ENCODE measurements at regions of chr1 and their contacts with region 1.

Region 1: DNA sequence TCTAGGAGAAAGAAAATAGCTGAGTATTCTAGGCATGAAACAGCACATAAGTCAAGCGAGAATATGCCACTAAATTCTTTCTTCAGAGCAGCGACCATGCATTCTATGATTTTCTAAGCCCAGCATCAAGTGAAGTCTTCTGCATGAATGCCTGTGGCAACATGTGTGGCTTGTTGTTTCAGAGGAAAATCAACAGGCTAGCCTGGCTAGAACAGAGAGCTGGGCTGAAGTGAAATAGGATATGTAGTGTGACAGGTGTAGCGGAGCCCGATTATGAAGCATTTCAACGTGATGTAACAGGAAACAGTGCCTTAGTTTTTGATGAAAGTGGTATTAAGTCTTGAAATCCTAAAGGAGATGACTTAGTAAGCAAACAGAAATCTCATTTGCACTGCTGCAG is 7.0 kb downstream of the CSDE1 start:
- DNase-seq: no peak
- ATAC-seq: peak; percentile 80 to 89 (median 86)
- H3K4me3 ChIP-seq: peak overlapping the region; percentile 84
- H3K27ac ChIP-seq: peak overlapping the region; percentile 100
- H3K4me1 ChIP-seq: peaks cover 85% of the 10 kb centered on the region
- H3K27me3 ChIP-seq: no peaks in the 10 kb centered on the region
- CTCF ChIP-seq: no peak

Region 2: GRCh38 chr1:114467488-114467887 is 283.3 kb before region 1 on chr1:
- intact Hi-C with region 1: no loop called
- DNase-seq: no peak
- ATAC-seq: no peak
- H3K4me3 ChIP-seq: no peak overlapping the region
- H3K27ac ChIP-seq: no peak overlapping the region
- H3K4me1 ChIP-seq: peaks cover 2% of the 10 kb centered on the region
- H3K27me3 ChIP-seq: no peaks in the 10 kb centered on the region
- CTCF ChIP-seq: no peak

Region 3: GRCh38 chr1:114685851-114686534 is 64.8 kb before region 1 on chr1:
- intact Hi-C with region 1: loop called in 1 of 2 experiments (anchors 5 kb)
- DNase-seq: no peak
- ATAC-seq: peak; percentile 83 to 92 (median 87)
- H3K4me3 ChIP-seq: peak overlapping the region; percentile 31
- H3K27ac ChIP-seq: peak overlapping the region; percentile 94
- H3K4me1 ChIP-seq: peaks cover 75% of the 10 kb centered on the region
- H3K27me3 ChIP-seq: no peaks in the 10 kb centered on the region
- CTCF ChIP-seq: no peak

Region 4: DNA sequence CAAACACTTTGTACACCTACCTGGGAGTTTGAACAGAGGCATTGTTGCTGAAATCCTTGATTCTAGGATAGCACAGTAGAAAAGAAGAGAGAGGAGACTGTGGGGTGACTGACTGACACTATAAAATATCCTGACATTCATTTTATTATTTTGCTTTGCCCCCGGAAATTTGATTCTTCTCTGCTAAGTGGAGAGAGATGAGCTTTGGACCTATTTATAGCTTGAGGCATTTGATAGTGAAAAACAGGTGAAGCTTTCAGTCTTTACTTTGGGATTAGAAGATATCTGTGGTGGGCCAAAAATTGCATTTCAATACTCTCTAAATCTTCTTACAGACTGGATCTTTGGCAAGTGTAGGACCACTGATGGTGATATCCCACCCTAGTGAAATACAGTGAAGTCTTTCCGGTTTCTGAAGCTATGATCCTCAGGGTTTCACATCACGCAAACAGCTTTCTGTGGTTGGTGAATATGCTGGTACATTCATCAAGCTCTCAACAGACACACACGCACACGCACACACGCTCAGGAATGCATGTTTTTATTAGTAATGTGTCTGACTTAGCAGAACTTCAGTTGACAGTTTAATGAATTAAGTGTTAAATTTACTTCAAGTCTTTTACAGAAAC is 55.2 kb before region 1 on chr1 and contains the start of gene AMPD1:
- intact Hi-C with region 1: loop called in 1 of 2 experiments (anchors 1 kb)
- DNase-seq: no peak
- ATAC-seq: peak; percentile 71 to 80 (median 74)
- H3K4me3 ChIP-seq: peak within 1 kb of the TSS; percentile 75
- H3K27ac ChIP-seq: peak within 1 kb of the TSS; percentile 94
- H3K4me1 ChIP-seq: peaks cover 20% of the 10 kb centered on the region
- H3K27me3 ChIP-seq: no peaks in the 10 kb centered on the region
- CTCF ChIP-seq: no peak
- total RNA-seq, gene AMPD1: 73.4 to 289 (median 155) TPM

Region 5: DNA sequence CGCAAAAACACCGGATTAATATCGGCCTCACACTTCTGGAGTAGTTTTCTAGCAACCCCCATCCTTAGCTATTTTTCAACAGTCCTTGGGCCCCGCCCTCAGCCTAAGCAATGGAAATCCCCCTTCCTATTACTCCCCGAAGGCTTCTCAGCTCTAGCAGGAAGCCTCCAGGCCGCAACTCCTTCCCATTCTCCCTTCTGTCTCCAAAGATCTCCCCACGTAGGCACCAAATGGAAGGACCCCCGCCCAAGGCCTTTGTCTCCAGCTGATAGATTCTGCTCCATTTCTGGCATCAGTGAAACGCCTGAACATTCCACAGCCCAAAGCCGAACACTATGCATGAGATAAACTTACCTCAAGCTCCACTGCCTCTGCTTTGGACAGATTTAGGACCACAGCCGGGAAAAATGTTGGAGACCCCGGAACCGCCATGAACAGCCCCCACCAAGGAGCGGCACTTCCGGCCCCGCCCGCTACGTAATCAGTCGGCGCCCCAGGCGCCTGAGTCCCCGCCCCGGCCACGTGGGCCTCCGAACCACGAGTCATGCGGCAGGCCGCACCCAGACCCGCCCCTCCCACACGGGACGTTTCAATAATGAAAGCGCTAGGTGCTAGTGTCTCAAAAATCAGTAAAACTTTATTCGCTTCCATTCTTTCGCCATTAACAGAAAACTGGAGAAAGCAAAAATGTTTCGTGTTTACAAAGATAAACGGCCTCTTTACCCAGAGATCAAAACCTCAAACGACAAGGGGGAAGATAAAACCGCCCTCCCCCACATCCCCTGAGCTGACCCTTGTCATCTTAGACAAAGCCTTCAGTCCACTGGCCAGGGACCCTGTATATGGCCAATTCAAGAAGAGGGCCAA is 34.2 kb before region 1 on chr1 and contains the start of gene NRAS:
- intact Hi-C with region 1: loop called in 1 of 2 experiments (anchors 5 kb)
- DNase-seq: peak; percentile 95 to 96
- ATAC-seq: peak; percentile 93 to 95 (median 94)
- H3K4me3 ChIP-seq: peak within 1 kb of the TSS; percentile 66
- H3K27ac ChIP-seq: peak within 1 kb of the TSS; percentile 83
- H3K4me1 ChIP-seq: peaks cover 26% of the 10 kb centered on the region
- H3K27me3 ChIP-seq: no peaks in the 10 kb centered on the region
- CTCF ChIP-seq: no peak
- total RNA-seq, gene NRAS: 3.6 to 6.6 (median 5.9) TPM

Measured in psoas muscle (tissue), 8 donors.